CD8-positive, alpha-beta memory T cell (primary cell): ENCODE measurements at regions of chr7 and their contacts with region 1.

Region 1: DNA sequence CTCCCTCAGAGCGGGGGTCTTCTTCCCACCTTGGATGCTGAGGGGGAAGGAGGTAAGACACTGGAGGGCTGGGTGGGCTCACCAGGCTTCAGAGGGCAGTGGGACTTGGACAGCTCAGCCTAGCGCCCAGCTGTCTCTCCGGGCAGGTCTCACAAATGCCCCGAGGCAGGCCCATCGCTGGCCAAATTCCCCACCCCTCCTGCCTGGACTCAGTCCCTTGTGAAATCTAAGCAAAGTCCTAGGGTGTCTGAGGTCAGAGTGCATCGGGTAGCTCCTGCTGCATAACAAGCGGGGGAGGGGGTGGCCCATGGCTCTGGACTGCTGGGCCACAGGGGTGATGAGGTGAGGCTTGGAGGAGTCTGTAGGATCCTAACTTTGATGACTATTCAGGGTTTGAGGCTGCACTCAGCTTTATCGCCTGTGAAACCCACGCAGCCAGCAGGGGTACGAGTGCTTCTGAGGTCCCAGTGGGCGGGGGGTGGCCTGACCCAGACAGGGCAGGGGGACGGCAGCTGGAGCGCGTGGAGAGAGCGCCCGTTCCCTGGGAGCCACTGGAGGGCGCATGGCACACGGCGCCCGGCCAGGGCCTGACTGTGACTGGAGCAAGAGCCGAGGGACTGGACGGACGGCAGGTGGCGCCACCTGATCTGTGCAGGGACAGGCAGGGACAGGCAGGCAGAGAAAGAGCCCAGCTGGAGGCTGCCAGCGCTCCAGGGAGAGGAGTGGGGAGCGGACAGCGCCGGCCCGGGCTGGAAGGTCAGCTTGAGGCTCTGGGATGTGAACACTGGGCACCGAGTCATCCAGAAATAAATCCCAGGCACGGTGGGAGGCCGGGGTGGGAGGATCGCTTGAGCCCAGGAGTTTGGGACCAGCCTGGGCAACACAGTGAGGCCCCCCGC is 10.0 kb downstream of the CYP2W1 start:
- DNase-seq: peak; percentile 83 to 95 (median 89)
- H3K4me3 ChIP-seq: no peak overlapping the region
- H3K4me3 Mint-ChIP-seq: no peak overlapping the region
- H3K27ac ChIP-seq: no peak overlapping the region
- H3K27ac Mint-ChIP-seq: peak overlapping the region in 1 of 8 donors; percentile 66
- H3K4me1 ChIP-seq: peaks cover 5% of the 10 kb centered on the region
- H3K4me1 Mint-ChIP-seq: peaks cover 0 to 5% (median 3%) of the 10 kb centered on the region in 3 donors
- H3K27me3 ChIP-seq: no peaks in the 10 kb centered on the region
- H3K27me3 Mint-ChIP-seq: no peaks in the 10 kb centered on the region

Region 2: DNA sequence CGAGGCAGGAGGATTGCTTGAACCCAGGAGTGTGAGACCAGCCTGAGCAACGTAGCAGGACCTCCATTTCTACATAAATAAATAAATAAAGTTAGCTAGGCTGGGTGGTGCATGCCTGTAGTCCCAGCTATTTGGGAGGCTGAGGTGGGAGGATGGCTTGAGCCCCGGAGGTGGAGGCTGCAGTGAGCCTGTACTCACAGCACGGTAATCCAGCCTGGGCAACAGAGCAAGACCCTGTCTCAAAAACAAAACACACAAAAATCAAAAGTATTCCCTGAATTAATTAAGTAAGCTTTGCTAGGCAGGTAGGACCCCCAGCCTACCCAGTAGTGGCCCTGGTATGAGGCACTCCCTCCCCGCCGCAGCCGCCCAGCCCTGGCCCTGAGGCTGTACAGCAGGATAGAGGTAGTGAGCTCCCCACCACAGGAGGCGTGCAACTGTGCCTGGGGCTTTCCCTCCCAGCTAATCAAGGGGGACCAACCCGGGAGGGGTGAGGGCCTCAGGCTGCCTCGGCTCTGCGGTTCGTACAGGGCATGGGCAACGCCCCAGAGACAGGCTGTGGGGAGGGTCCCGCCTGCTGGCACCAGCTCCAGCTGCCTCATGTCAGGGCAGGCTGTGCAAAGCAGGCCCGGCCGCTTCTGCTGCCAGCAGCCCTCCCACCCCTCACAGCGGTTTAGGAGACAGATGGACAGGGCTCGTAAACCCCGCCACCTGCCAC is 11.0 kb before region 1 on chr7:
- CTCF ChIA-PET with region 1: interaction called, 43 read pairs
- POLR2A ChIA-PET with region 1: no interaction called
- DNase-seq: no peak
- H3K4me3 ChIP-seq: no peak overlapping the region
- H3K4me3 Mint-ChIP-seq: no peak overlapping the region
- H3K27ac ChIP-seq: no peak overlapping the region
- H3K27ac Mint-ChIP-seq: no peak overlapping the region
- H3K4me1 ChIP-seq: no peaks in the 10 kb centered on the region
- H3K4me1 Mint-ChIP-seq: no peaks in the 10 kb centered on the region
- H3K27me3 ChIP-seq: no peaks in the 10 kb centered on the region
- H3K27me3 Mint-ChIP-seq: peaks cover 9 to 10% of the 10 kb centered on the region in 2 donors

Region 3: DNA sequence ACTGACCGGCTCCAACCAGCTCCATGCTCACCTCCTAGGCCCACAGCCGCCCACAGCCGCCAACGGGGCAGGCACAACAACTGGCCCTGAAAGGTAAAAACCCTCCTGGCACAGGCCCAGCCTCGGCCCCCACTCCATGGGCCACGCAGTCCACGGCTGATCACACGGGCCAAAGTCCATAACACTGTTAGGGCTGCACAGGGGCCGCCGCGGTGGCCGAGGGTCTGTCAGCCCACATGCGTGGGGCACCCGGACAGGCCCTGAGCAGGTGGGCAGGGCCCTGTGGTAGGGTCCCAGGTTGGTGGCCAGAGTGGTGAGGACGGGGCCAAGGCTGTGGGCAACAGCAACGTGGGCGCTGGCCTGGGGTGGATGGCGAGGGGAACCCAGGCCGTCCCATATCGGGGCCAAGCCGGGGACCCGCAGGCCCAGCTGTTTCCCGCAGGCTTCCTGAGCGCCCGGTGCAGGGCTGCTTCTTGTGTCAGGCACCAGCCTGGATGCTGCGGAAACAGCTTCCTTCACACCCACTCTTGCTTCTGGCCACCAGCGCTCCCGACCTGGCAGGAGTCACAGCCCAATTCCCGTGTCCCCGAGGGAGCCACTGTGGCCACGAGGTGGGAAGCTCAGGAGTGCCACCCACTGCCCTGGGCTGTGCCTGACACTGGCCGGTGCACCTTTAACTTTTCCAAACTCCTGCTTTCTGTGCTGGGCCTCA is 19.2 kb after region 1 on chr7:
- CTCF ChIA-PET with region 1: interaction called, 12 read pairs
- POLR2A ChIA-PET with region 1: no interaction called
- DNase-seq: no peak
- H3K4me3 ChIP-seq: no peak overlapping the region
- H3K4me3 Mint-ChIP-seq: no peak overlapping the region
- H3K27ac ChIP-seq: no peak overlapping the region
- H3K27ac Mint-ChIP-seq: peak overlapping the region in 2 of 8 donors; percentile 33 to 97
- H3K4me1 ChIP-seq: peaks cover 7% of the 10 kb centered on the region
- H3K4me1 Mint-ChIP-seq: peaks cover 12 to 24% (median 13%) of the 10 kb centered on the region in 3 donors
- H3K27me3 ChIP-seq: no peaks in the 10 kb centered on the region
- H3K27me3 Mint-ChIP-seq: no peaks in the 10 kb centered on the region

Region 4: DNA sequence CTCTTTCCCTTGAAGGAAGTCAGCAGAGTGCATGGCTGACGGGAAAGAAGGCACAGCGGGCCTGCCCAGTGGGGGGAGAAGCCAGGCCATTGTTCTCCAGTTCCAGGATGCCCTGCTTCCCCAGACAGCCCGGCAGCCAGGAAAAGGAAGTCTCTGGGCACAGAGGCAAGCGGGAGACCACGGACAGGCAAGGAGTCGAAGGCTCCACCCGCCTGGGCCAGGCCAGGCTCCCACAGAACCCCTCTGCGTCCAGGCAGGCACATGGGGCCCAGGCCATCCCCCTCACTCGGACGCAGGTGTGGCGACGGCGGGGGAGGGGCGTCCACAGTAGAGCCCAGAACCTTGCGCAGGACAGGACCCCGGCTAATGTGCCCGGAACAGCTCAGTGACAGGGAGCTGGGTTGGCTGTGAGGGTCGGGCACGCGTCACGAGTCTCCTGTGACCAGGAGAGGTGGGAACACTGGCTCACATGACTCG is 60.1 kb after region 1 on chr7:
- CTCF ChIA-PET with region 1: interaction called, 17 read pairs
- POLR2A ChIA-PET with region 1: no interaction called
- DNase-seq: no peak
- H3K4me3 ChIP-seq: no peak overlapping the region
- H3K4me3 Mint-ChIP-seq: no peak overlapping the region
- H3K27ac ChIP-seq: no peak overlapping the region
- H3K27ac Mint-ChIP-seq: no peak overlapping the region
- H3K4me1 ChIP-seq: peaks cover 33% of the 10 kb centered on the region
- H3K4me1 Mint-ChIP-seq: peaks cover 7 to 21% (median 13%) of the 10 kb centered on the region in 3 donors
- H3K27me3 ChIP-seq: no peaks in the 10 kb centered on the region
- H3K27me3 Mint-ChIP-seq: no peaks in the 10 kb centered on the region

Region 5: GRCh38 chr7:1065263-1066260 is 72.6 kb after region 1 on chr7:
- CTCF ChIA-PET with region 1: interaction called, 222 read pairs
- POLR2A ChIA-PET with region 1: interaction called, 7 read pairs
- DNase-seq: peak; percentile 73 to 86 (median 78)
- H3K4me3 ChIP-seq: peak overlapping the region; percentile 50
- H3K4me3 Mint-ChIP-seq: peak overlapping the region in 6 of 7 donors; percentile 45 to 76 (median 63)
- H3K27ac ChIP-seq: no peak overlapping the region
- H3K27ac Mint-ChIP-seq: peak overlapping the region in 1 of 8 donors; percentile 85
- H3K4me1 ChIP-seq: peaks cover 8% of the 10 kb centered on the region
- H3K4me1 Mint-ChIP-seq: peaks cover 2 to 8% (median 8%) of the 10 kb centered on the region in 3 donors
- H3K27me3 ChIP-seq: no peaks in the 10 kb centered on the region
- H3K27me3 Mint-ChIP-seq: no peaks in the 10 kb centered on the region

Region 6: DNA sequence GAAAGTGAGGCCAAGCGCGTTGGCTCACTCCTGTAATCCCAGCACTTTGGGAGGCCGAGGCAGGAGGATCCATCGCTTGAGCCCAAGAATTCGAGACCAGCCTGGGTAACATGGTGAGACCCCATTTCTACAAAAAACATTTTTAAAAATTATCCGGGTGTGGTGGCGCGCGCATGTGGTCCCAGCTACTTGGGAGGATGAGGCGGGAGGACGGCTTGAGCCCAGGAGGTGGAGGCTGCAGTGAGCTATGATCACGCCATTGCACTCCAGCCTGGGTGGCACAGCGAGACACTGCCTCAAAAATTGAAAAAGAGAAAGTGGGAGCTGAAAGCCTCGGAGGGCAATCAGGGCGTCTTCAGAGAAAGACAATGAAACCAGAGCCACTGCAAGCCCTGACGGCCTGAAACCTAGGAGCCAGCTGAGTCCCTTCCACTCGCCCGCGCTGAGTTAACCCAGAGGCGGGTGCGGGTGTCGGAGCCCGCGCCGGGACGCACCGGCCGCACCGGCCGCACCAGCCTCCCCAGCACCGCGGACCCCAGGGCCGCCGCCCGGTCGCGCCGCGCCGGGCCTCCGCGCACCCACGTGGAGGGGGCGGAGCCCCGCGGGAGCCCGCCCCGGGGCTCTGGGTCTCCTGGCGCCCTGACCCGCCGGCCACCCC is 144.7 kb after region 1 on chr7:
- CTCF ChIA-PET with region 1: interaction called, 15 read pairs
- POLR2A ChIA-PET with region 1: no interaction called
- DNase-seq: no peak
- H3K4me3 ChIP-seq: peak overlapping the region; percentile 90
- H3K4me3 Mint-ChIP-seq: peak overlapping the region; percentile 90 to 96 (median 93)
- H3K27ac ChIP-seq: peak overlapping the region; percentile 94
- H3K27ac Mint-ChIP-seq: peak overlapping the region; percentile 84 to 98 (median 96)
- H3K4me1 ChIP-seq: peaks cover 13% of the 10 kb centered on the region
- H3K4me1 Mint-ChIP-seq: peaks cover 15 to 19% (median 17%) of the 10 kb centered on the region in 3 donors
- H3K27me3 ChIP-seq: no peaks in the 10 kb centered on the region
- H3K27me3 Mint-ChIP-seq: no peaks in the 10 kb centered on the region